Dorsolateral prefrontal cortex (tissue), 120 donors: ENCODE measurements at regions of chr10 and their contacts with region 1.

Region 1: DNA sequence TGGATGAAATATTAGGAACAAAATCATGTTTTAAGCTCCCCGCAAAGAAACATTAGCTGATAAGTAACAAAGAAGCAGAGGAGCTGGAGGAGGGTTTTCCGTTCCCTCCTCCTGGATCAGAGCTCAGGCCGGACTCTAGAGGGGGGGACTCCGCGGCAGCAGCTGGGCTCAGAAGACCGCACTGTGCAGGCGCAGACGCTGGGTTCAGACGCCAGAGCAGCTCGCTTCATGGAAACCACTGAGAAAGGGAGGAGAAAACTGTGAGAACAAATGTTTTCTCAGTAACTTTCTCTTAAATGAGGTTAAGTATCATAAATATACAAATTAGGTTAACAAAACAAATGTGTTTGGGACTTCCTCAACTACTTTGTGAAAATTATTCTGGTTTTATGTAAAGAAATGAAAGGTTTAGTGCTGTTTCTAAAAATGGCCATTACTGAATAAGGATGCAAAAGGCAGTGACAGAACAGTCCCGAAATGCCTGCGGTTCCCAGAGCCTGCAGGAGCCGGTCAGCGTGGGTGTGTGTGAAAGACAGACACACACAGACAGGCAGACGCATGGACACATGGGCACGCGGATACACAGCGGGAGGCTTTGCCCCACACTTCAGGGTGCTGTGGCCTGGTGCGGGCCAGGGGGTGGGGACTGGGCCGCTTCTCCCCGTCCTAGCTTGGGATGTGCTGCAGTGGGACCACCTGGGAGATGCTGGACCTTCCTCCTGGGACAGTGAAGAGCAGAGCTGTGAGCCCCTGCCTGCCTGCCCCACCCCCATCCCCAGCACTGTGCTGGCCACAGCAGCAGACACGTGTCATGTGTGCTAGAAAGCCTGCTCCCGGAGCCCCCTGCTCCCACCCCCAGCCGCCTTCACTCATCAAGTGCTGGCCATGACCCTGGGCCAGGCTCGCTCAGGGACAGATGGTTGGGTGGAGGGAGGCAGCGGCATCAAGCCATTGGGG is 20.3 kb upstream of the ADGRA1 start:
- DNase-seq: peak in 7 of 10 donors; percentile 47 to 81 (median 70)
- H3K4me3 ChIP-seq: peak overlapping the region in 1 of 59 donors; percentile 10
- H3K27ac ChIP-seq: peak overlapping the region in 38 of 59 donors; percentile 3 to 78 (median 51)
- H3K27me3 ChIP-seq: peaks cover 0 to 19% (median 0%) of the 10 kb centered on the region in 45 donors
- CTCF ChIP-seq: no peak

Region 2: GRCh38 chr10:132987671-132988571 is 79.5 kb before region 1 on chr10:
- intact Hi-C with region 1: loop called in 1 of 2 experiments (anchors 2 kb)
- DNase-seq: peak; percentile 42 to 90 (median 76)
- H3K4me3 ChIP-seq: peak overlapping the region in 34 of 59 donors; percentile 0 to 54 (median 18)
- H3K27ac ChIP-seq: peak overlapping the region in 46 of 59 donors; percentile 2 to 84 (median 62)
- H3K27me3 ChIP-seq: peaks cover 0 to 5% (median 0%) of the 10 kb centered on the region in 45 donors
- CTCF ChIP-seq: no peak